Activated T-helper 2 cell treated with anti-CD3 and anti-CD28 coated beads, Interferon-gamma antibody, Interleukin-2, Interleukin-4, amounts not matched to agents 10 μg/mL and 5 μg/mL and 100 μg/mL, durations not matched to agents 14 hours and 24 hours and 36 hours (primary cell): ENCODE measurements at regions of chr7 and their contacts with region 1.

Region 1: DNA sequence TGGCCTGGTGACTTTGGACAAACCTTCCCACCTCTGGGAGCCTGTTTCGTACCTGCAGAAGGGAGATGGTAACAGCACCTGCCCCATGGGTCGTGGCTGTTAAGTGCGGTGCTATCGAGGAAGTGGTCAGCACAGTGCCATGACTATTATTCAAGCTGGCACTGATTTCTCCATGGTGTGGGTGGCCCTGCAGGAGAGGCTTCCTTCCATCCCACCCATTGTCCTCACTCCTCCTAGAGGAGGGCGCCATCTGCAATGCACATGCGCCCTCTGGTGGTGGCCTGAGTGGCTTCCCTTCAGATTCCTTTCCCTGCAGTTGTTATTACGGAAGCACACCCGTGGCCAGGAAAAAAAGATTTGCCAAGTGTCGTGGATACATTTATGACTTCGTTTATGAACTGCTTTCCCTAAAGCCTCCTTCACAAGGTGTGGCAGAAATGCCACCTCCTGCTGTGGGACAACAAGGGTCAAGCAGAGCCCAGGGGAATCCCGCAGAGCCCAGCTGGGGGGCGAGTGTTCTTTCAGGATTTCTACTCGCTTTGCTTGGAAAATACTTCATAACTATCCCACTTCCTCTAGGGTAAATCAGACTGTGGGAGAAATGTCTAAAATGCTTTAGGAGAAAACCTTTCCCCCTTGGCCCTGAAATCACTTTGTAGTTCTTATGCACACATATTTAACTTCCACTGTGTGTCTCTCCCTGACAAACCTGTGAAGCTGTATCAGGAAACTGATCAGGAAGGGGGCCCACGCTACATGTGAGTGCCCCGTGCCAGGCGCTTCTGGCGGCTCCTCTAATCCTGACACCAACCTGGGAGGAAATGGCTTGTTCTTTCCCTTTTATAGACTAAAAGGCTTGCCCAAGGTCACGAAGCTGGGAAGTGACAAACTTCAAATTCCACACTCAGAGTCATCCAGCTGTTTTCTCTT is 98.0 kb upstream of the ANLN start:
- DNase-seq: peak; percentile 41
- H3K4me3 Mint-ChIP-seq: peak overlapping the region; percentile 14
- H3K27ac Mint-ChIP-seq: no peak overlapping the region
- H3K4me1 Mint-ChIP-seq: peaks cover 31% of the 10 kb centered on the region
- H3K27me3 Mint-ChIP-seq: peaks cover 4% of the 10 kb centered on the region

Region 2: DNA sequence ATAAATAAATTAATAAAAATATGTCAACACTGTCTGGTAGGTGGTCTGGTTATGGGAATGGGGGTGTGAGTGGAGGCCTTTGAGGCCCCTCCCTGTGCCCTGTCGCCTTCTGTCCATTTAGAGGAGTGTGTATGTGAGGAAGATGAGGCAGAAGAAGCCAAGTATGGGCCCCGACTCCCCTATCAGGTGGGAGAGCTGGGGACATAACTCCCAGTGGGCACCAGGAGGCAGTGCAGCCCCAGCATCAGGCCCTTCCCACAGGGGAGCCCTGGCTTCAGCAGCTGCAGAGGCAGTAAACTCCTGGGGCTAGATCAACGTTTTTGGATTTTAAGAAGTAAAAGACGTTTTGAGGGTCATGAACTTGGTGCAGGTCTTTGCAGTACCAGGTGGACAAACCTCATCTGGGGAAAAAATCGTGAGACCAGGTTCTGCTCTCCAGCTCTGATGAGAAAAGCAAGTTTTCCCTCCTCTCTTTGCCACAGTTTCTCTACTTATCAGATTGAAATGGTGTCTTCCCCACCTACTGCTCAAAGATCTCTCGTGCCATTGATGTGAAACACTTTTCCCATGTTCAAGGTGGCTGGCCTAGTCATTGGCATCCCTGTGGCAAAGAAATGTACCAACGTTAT is 306.4 kb before region 1 on chr7:
- intact Hi-C with region 1: loop called (anchors 1 kb)
- DNase-seq: peak; percentile 49
- H3K4me3 Mint-ChIP-seq: no peak overlapping the region
- H3K27ac Mint-ChIP-seq: no peak overlapping the region
- H3K4me1 Mint-ChIP-seq: no peaks in the 10 kb centered on the region
- H3K27me3 Mint-ChIP-seq: peaks cover 1% of the 10 kb centered on the region

Region 3: DNA sequence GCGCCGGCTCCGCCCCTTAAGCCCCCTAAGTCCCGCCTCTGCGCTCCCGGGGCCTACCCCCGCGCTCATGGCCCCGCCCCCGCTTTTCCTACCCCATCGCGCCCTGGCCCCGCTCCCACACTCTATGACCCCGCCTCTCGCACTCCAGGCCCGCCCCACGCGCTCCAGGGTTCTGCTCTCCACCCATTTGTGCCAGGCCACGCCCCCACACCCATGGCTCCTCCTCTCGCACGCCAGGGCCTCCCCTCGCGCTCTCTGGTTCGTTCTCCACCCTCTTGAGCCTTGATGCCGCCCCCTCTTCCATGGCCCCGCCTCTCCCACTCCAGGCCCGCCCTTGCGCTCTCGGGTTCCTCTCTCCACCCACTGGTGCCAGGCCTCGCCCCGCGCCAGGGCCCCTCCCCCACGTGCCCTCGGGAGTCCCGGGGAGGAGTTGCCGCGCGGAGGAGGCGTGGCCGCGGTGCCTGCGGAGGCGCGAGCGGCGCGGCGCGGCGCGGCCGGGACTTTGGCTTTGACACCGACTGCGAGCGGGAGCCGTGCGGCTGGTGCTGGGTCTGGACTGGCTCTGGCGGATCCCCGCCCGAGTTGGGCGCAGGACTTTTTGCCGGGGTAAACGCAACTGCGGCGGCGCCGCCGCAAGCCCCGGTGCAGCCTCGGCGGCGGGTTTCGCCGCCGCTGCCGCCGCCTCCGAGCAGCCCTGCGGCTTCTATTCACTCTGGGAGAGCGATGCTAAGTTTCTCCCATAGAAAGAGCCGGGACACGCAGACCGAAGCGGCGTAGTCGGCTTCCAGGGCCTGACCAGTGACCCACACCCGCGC is 138.7 kb before region 1 on chr7 and contains the start of gene EEPD1:
- intact Hi-C with region 1: loop called (anchors 2 kb)
- DNase-seq: peak; percentile 99
- H3K4me3 Mint-ChIP-seq: peak within 1 kb of the TSS; percentile 70
- H3K27ac Mint-ChIP-seq: peak within 1 kb of the TSS; percentile 36
- H3K4me1 Mint-ChIP-seq: peaks cover 9% of the 10 kb centered on the region
- H3K27me3 Mint-ChIP-seq: peaks cover 27% of the 10 kb centered on the region
- total RNA-seq, gene EEPD1: 0.57 and 0.67 TPM in 2 replicates

Region 4: DNA sequence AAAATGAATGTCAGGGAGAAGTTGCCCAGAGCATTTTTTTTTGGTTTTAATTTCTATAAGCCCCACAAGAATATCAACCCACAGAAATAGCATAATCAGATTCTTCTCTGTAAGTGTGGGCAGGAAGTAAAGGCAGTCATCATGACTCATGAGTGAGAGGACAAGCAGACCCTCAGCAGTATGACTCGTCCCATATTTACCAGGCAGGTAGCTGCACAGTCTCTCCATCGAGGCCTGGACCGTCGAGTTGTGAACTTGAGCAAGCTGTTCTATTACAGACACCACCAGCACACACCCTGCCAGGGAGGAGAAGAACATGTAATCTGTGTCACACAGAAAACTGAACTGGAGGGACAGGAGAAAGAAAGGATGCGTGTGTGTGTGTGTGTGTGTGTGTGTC is 394.8 kb after region 1 on chr7:
- intact Hi-C with region 1: no loop called
- DNase-seq: peak; percentile 37
- H3K4me3 Mint-ChIP-seq: peak overlapping the region; percentile 49
- H3K27ac Mint-ChIP-seq: peak overlapping the region; percentile 93
- H3K4me1 Mint-ChIP-seq: peaks cover 79% of the 10 kb centered on the region
- H3K27me3 Mint-ChIP-seq: no peaks in the 10 kb centered on the region